ENCODE measurements at regions of chr9 and their contacts with region 1.

Region 1: DNA sequence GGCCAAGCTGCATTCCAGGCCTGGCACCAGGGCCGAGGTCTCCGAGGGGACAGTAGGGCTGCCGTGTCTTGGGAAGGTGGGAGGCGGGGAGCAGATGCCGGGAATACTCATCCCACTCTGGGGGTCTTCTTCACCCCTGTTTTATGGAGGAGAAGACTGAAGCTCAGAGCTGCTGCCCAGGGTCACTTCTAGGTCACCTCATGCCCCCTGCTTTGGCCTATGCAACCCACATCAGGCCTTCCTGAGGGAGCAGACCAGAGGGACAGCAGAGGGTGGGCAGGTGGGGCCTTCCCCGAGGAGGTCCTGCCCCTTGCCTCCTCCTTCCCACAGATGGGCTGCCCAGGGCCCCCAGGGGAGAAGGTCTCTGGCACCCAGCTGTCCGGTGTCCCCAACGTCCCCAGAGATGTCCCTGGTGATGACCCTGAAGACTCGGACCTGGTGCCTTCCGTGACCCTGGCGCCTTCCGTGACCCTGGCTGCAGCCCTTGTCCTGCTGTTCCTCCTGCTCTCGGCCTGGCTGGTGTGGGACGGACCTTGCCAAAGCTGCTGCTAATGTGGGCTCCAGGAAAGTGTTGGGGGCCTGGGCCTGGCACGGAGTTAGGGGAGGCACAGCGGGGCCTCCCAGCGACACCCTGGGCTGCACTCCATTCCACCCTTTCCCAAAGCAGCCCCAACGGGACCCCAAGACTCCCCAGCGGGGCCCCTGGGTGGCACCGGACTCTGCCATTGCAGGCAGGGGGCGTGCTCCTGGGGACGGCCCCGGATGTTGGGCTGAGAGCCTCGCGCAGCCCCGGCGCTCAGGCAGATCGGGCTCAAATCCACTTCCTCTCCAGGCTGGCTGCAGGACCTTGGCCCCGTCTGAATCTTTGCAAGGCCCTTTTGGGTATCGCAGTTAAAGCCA is 6.7 kb upstream of the SLC2A6 start:
- DNase-seq: no peak
- H3K4me3 ChIP-seq: no peak overlapping the region
- H3K27ac ChIP-seq: no peak overlapping the region
- H3K4me1 ChIP-seq: peaks cover 8 to 17% (median 17%) of the 10 kb centered on the region in 4 donors
- H3K27me3 ChIP-seq: peaks cover 0 to 37% (median 0%) of the 10 kb centered on the region in 3 donors
- CTCF ChIP-seq: no peak
- EP300 ChIP-seq: no peak
- POLR2A ChIP-seq: no peak

Region 2: GRCh38 chr9:133184962-133185361 is 300.6 kb before region 1 on chr9:
- intact Hi-C with region 1: loop called (anchors 10 kb)
- DNase-seq: peak; percentile 46 to 88
- H3K4me3 ChIP-seq: no peak overlapping the region
- H3K27ac ChIP-seq: no peak overlapping the region
- H3K4me1 ChIP-seq: peaks cover 0 to 11% (median 6%) of the 10 kb centered on the region in 4 donors
- H3K27me3 ChIP-seq: peaks cover 0 to 62% (median 22%) of the 10 kb centered on the region in 3 donors
- CTCF ChIP-seq: peak in 5 of 7 experiments; percentile 30 to 49 (median 47)
- EP300 ChIP-seq: no peak
- POLR2A ChIP-seq: no peak

Region 3: GRCh38 chr9:133301253-133302230 is 184.1 kb before region 1 on chr9:
- intact Hi-C with region 1: no loop called
- DNase-seq: peak in 1 of 2 donors; percentile 5
- H3K4me3 ChIP-seq: no peak overlapping the region
- H3K27ac ChIP-seq: no peak overlapping the region
- H3K4me1 ChIP-seq: no peaks in the 10 kb centered on the region
- H3K27me3 ChIP-seq: peaks cover 0 to 43% (median 0%) of the 10 kb centered on the region in 3 donors
- CTCF ChIP-seq: no peak
- EP300 ChIP-seq: no peak
- POLR2A ChIP-seq: no peak

Region 4: DNA sequence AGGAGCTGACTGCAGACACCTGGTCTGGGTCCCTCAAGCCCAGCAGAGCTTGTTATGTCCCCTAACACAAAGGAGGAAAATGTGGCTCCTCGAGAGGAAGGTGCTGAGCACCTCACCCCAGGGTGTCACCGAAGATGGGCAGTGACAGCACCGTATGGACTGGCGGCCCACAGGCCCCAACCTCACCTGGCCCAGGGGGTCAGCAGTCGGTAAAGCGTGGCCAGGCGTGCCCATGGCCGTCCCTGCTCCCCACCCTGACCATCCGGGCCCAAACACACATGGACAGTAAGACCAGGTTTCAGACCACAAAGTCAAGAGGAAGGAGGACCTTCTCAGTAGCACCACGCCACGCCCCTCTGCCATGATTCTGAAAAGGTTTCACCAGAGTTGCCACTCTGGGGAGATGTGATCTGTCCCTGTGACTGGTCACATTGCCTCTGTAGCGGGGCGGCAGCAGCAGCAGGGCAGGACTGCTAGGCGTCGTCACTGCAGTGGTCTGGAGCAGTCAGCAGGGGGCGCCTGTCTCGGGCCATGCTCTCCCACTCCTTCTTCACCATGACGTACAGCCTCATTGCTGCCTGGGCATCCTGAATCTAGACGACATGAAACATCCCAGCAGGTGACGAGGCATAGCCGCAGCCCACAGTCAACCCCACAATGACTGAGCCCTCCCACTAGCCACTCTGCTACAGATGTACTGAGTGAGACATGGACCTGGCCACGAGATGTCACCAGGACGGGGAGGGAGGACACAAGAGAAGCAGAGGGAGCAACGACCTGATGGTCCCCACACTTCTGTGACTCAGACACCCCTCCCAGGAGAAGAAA is 78.9 kb before region 1 on chr9:
- intact Hi-C with region 1: loop called (anchors 5 kb)
- DNase-seq: peak; percentile 82 to 93
- H3K4me3 ChIP-seq: no peak overlapping the region
- H3K27ac ChIP-seq: no peak overlapping the region
- H3K4me1 ChIP-seq: no peaks in the 10 kb centered on the region
- H3K27me3 ChIP-seq: no peaks in the 10 kb centered on the region
- CTCF ChIP-seq: peak in 5 of 7 experiments; percentile 83 to 95 (median 91)
- EP300 ChIP-seq: no peak
- POLR2A ChIP-seq: no peak